Activated naive CD4-positive, alpha-beta T cell treated with anti-CD3 and anti-CD28 coated beads for 36 hours (primary cell): ENCODE measurements at regions of chr22 and their contacts with region 1.

Region 1: GRCh38 chr22:24423519-24424000 is 3.8 kb upstream of the ADORA2A start:
- DNase-seq: peak; percentile 58
- H3K4me3 Mint-ChIP-seq: peak overlapping the region; percentile 69
- H3K27ac Mint-ChIP-seq: no peak overlapping the region
- H3K4me1 Mint-ChIP-seq: peaks cover 25% of the 10 kb centered on the region
- H3K27me3 Mint-ChIP-seq: no peaks in the 10 kb centered on the region

Region 2: DNA sequence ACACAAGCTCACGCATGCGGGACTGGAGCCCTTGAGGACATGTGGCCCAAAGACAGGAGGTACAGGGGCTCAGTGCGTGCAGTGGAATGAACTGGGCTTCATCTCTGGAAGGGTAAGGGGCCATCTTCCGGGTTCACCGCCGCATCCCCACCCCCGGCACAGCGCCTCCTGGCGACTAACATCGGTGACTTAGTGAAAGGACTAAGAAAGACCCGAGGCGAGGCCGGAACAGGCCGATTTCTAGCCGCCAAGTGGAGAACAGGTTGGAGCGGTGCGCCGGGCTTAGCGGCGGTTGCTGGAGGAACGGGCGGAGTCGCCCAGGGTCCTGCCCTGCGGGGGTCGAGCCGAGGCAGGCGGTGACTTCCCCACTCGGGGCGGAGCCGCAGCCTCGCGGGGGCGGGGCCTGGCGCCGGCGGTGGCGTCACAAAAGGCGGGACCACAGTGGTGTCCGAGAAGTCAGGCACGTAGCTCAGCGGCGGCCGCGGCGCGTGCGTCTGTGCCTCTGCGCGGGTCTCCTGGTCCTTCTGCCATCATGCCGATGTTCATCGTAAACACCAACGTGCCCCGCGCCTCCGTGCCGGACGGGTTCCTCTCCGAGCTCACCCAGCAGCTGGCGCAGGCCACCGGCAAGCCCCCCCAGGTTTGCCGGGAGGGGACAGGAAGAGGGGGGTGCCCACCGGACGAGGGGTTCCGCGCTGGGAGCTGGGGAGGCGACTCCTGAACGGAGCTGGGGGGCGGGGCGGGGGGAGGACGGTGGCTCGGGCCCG is 529.4 kb before region 1 on chr22 and contains the start of gene MIF:
- CTCF ChIA-PET with region 1: no interaction called
- intact Hi-C with region 1: loop called (anchors 10 kb)
- DNase-seq: peak; percentile 96
- H3K4me3 Mint-ChIP-seq: peak within 1 kb of the TSS; percentile 95
- H3K27ac Mint-ChIP-seq: peak within 1 kb of the TSS; percentile 97
- H3K4me1 Mint-ChIP-seq: peaks cover 19% of the 10 kb centered on the region
- H3K27me3 Mint-ChIP-seq: no peaks in the 10 kb centered on the region
- total RNA-seq, gene MIF: 1,489 to 1,512 TPM

Region 3: DNA sequence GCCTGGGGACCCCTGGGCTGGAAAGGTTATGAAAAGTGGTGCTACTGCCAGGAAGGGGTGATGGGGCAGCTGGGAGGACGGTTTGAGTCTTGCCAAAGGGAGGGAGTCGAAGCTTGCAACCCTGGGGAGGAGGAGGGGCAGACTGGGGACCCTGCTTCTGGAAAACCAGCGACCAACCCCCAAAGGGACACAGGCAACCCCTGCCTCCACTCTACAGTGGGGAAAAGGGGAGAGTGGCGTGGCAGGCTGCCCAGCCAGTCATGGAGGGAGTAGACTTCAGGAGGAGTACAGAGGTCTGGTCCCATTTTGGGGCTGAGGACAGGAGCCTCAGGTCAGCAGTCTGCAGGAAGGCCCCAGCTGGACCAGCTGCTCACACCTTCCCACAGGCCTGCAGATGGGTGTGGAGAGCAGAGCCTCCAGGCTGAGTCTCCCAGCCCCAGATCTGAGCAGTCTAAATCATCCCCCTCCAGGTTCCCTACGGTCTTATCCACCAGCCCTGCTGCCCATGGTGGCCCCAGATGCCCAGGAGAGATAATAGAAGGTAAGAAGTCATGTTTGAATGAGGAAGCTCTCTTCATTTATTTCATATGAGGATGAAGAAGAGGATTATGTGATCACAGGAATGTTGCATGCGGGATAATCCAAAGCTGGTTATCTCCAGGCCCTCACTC is 452.6 kb before region 1 on chr22:
- CTCF ChIA-PET with region 1: no interaction called
- intact Hi-C with region 1: no loop called
- DNase-seq: no peak
- H3K4me3 Mint-ChIP-seq: peak overlapping the region; percentile 7
- H3K27ac Mint-ChIP-seq: peak overlapping the region; percentile 41
- H3K4me1 Mint-ChIP-seq: peaks cover 19% of the 10 kb centered on the region
- H3K27me3 Mint-ChIP-seq: no peaks in the 10 kb centered on the region

Region 4: GRCh38 chr22:24310969-24311368 is 112.6 kb before region 1 on chr22:
- CTCF ChIA-PET with region 1: no interaction called
- intact Hi-C with region 1: no loop called
- DNase-seq: no peak
- H3K4me3 Mint-ChIP-seq: no peak overlapping the region
- H3K27ac Mint-ChIP-seq: no peak overlapping the region
- H3K4me1 Mint-ChIP-seq: peaks cover 9% of the 10 kb centered on the region
- H3K27me3 Mint-ChIP-seq: no peaks in the 10 kb centered on the region

Region 5: GRCh38 chr22:24325105-24325757 is 98.3 kb before region 1 on chr22:
- CTCF ChIA-PET with region 1: no interaction called
- intact Hi-C with region 1: loop called (anchors 5 kb)
- DNase-seq: peak; percentile 31
- H3K4me3 Mint-ChIP-seq: no peak overlapping the region
- H3K27ac Mint-ChIP-seq: peak overlapping the region; percentile 35
- H3K4me1 Mint-ChIP-seq: peaks cover 38% of the 10 kb centered on the region
- H3K27me3 Mint-ChIP-seq: no peaks in the 10 kb centered on the region

Region 6: GRCh38 chr22:24466716-24467328 is 43.3 kb after region 1 on chr22:
- CTCF ChIA-PET with region 1: no interaction called
- intact Hi-C with region 1: no loop called
- DNase-seq: no peak
- H3K4me3 Mint-ChIP-seq: no peak overlapping the region
- H3K27ac Mint-ChIP-seq: no peak overlapping the region
- H3K4me1 Mint-ChIP-seq: peaks cover 6% of the 10 kb centered on the region
- H3K27me3 Mint-ChIP-seq: no peaks in the 10 kb centered on the region

Region 7: DNA sequence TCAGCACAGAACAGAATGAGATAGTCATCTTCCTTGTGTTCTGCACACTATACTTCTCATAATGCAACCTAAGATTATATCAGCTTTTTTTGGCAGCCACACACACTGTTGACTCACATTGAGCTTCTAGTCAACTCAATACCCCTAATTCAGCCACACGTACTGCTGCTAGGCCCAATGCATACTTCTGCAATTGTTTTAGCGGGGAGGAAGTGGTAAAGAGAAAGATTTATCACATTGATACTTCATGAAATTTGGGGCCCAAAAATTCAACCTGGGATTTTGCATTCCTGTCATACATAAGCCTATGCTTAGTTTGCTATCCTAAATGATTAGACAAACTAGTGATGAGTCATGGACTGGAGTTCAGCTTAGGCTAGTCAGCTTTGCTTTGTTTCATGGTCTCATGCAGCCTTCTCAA is 63.0 kb after region 1 on chr22:
- CTCF ChIA-PET with region 1: interaction called, 12 read pairs
- intact Hi-C with region 1: loop called (anchors 2 kb)
- DNase-seq: peak; percentile 49
- H3K4me3 Mint-ChIP-seq: no peak overlapping the region
- H3K27ac Mint-ChIP-seq: no peak overlapping the region
- H3K4me1 Mint-ChIP-seq: peaks cover 20% of the 10 kb centered on the region
- H3K27me3 Mint-ChIP-seq: no peaks in the 10 kb centered on the region

Region 8: DNA sequence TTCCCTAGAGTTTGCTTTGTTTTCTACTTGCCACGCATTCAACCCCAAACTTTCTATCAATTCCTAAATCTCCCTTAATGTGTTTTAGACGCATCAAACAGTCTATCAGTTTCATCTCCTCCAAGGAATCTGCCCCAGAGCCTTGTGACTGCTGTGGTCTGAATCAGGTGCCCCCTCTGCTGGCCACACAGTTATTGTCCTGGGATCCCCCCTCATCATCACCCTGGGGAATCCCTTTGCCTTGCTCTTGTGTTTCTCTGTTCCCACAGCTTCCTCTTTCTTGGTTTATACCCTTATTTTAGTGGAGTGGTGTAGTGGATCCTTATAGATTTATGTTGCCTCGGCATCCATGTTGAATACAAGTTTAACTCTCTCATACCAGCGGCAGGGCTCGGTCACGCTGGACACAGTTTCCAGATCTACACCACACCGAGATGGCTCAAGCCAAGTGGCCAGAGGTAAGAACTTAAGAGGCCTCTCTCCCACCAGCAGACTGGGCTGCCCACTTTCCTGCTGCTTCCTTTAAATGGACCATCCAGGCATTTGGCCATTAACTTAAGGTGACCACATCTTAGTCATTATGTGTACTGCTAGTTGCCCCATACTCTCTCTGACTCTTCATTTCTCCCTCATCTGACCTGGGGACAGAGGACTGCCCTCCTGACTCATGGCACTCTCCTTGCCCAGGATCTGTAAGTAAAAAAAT is 79.7 kb after region 1 on chr22:
- CTCF ChIA-PET with region 1: interaction called, 45 read pairs
- intact Hi-C with region 1: loop called (anchors 1 kb)
- DNase-seq: peak; percentile 87
- H3K4me3 Mint-ChIP-seq: no peak overlapping the region
- H3K27ac Mint-ChIP-seq: no peak overlapping the region
- H3K4me1 Mint-ChIP-seq: peaks cover 7% of the 10 kb centered on the region
- H3K27me3 Mint-ChIP-seq: no peaks in the 10 kb centered on the region

Region 9: GRCh38 chr22:24525416-24526037 is 102.0 kb after region 1 on chr22:
- CTCF ChIA-PET with region 1: interaction called, 16 read pairs
- intact Hi-C with region 1: loop called (anchors 1 kb)
- DNase-seq: peak; percentile 92
- H3K4me3 Mint-ChIP-seq: no peak overlapping the region
- H3K27ac Mint-ChIP-seq: no peak overlapping the region
- H3K4me1 Mint-ChIP-seq: peaks cover 10% of the 10 kb centered on the region
- H3K27me3 Mint-ChIP-seq: no peaks in the 10 kb centered on the region

Region 10: DNA sequence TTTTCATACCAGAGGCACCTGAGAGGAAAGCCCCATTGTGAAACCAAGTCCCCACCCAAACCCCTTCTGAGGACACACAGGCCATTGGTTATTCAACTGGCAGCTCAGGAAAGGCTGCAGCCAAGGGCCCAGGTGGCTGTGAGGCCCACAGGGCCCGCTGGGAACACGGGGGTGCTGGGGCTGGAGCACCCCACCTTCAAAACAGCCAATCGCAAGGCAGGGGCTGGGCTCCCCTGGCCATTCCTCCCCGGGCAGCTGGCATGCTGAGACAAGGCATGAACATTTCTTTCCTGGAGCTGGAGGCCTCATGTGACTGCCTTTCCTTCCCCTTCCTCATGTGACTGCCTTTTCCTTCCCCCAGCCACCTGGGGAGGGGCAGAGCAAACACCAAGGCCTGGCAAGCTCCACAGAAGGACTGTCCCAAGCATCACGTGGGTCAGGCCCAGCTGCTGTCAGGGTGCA is 274.1 kb after region 1 on chr22:
- CTCF ChIA-PET with region 1: no interaction called
- intact Hi-C with region 1: no loop called
- DNase-seq: no peak
- H3K4me3 Mint-ChIP-seq: no peak overlapping the region
- H3K27ac Mint-ChIP-seq: no peak overlapping the region
- H3K4me1 Mint-ChIP-seq: no peaks in the 10 kb centered on the region
- H3K27me3 Mint-ChIP-seq: no peaks in the 10 kb centered on the region